RWPE1 (cell line): ENCODE measurements at regions of chr2 and their contacts with region 1.

Region 1: DNA sequence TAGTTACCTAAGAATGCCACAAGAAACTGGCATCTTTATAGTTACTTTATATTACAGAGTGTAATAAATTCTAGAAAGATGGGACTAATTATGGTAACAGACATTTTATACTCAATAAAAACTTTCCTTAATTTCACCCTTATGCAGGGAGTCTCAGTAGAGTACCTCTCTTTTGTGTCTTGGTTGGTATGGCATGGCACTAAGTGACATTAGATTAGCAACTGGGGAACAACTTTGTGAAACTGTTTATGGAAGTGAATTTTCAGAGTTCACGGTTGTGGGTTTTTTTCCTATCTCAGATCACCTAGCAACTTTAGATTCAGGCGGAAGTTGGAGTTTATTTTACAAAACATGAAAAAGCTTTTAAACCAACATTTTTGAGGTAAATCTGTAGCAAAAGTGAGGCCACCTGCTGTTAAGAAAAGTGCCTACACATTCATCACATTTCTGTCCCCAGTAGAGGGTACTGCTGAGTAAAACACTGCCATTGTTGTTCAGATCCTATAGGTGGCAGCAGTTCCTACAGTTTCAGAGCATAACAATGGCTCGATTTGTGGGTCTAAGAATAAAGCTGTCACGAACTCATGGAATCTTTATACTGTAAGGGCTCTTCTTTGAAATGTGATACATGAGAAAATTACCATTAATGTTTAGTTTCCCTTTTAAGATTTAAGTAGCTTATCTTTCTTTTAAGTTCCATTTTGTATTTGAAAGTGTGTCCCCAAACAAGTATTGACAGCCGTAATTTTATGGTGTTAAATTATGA is 117.6 kb downstream of the CAMKMT start:
- DNase-seq: peak; percentile 71
- H3K27ac ChIP-seq: no peak overlapping the region
- CTCF ChIP-seq: peak; percentile 98

Region 2: GRCh38 chr2:44314362-44314761 is 164.9 kb before region 1 on chr2:
- CTCF ChIA-PET with region 1: no interaction called
- POLR2A ChIA-PET with region 1: no interaction called
- DNase-seq: no peak
- H3K27ac ChIP-seq: no peak overlapping the region
- CTCF ChIP-seq: no peak

Region 3: GRCh38 chr2:44397447-44398175 is 81.7 kb before region 1 on chr2:
- CTCF ChIA-PET with region 1: interaction called, 11 read pairs
- POLR2A ChIA-PET with region 1: no interaction called
- DNase-seq: no peak
- H3K27ac ChIP-seq: no peak overlapping the region
- CTCF ChIP-seq: no peak

Region 4: DNA sequence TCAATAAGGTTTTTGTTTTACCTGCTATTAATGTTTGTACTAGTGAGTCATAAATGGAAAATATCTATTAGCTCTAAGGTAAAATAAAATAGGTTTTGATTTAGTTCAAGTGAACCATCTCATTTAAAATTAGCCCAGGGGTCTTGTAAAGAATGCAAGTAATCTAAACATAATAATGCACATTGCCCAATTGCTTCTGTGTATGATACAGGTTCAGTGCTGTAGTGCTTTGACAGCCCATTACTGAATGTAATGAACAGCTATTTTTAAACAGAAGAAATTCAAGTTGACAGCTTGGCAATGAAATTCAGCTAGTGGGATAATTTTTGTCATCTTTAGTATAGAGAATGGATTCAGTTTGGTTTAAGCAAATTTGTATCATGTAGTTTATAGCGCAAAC is 26.0 kb before region 1 on chr2:
- CTCF ChIA-PET with region 1: interaction called, 11 read pairs
- POLR2A ChIA-PET with region 1: no interaction called
- DNase-seq: no peak
- H3K27ac ChIP-seq: no peak overlapping the region
- CTCF ChIP-seq: no peak

Region 5: GRCh38 chr2:44490726-44491125 is 11.4 kb after region 1 on chr2:
- CTCF ChIA-PET with region 1: interaction called, 13 read pairs
- POLR2A ChIA-PET with region 1: no interaction called
- DNase-seq: no peak
- H3K27ac ChIP-seq: no peak overlapping the region
- CTCF ChIP-seq: no peak

Region 6: GRCh38 chr2:44680983-44681531 is 201.8 kb after region 1 on chr2:
- CTCF ChIA-PET with region 1: no interaction called
- POLR2A ChIA-PET with region 1: no interaction called
- DNase-seq: no peak
- H3K27ac ChIP-seq: no peak overlapping the region
- CTCF ChIP-seq: no peak

Region 7: GRCh38 chr2:44715671-44716081 is 236.4 kb after region 1 on chr2:
- CTCF ChIA-PET with region 1: interaction called, 14 read pairs
- POLR2A ChIA-PET with region 1: no interaction called
- DNase-seq: peak; percentile 48
- H3K27ac ChIP-seq: no peak overlapping the region
- CTCF ChIP-seq: peak; percentile 37

Region 8: DNA sequence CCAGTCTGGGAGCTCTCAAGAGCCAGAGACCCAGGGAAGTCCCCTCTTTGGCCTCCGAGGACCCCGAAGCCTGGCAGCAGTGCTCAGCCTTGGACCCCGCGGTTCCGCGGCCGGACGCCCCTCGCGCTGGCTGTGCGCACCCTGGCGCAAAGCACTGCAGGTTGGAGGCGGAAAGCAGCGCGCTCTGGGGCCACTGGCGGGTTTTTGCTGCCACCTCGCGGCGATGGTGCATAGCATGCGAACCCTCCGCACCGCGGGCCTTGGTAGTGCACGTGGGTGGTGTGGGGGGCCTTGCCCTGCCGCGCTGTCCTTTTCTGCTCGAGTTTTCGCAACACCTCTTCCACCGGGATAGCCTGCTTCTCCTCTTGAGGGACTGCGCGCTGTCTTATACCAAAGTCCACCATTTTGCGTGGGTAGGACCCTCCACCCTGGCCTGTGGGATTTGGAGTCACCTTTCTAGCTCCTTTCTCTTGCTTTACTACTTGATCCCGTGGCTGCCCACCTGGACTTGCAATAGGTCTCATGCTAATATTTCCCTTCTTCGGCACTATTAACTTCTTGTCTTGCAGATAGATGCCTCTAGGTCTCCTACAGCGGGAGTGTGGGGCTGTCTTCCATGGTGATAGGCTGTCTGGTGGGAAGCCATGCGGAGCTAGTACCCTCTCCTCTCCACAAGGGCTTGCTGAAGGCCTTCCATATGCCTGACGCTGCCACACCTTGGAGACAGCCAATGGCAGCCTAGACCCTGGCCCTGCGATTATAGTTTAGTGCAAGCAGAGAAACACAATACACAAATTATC is 476.5 kb after region 1 on chr2:
- CTCF ChIA-PET with region 1: interaction called, 70 read pairs
- POLR2A ChIA-PET with region 1: no interaction called
- DNase-seq: peak; percentile 77
- H3K27ac ChIP-seq: no peak overlapping the region
- CTCF ChIP-seq: peak; percentile 91